T-cell (primary cell): ENCODE measurements at regions of chr3 and their contacts with region 1.

Region 1: GRCh38 chr3:26108846-26109489 is 319.1 kb downstream of the OXSM start:
- DNase-seq: no peak
- ATAC-seq: no peak
- H3K4me3 ChIP-seq: no peak overlapping the region
- H3K4me3 Mint-ChIP-seq: no peak overlapping the region
- H3K27ac ChIP-seq: no peak overlapping the region
- H3K27ac Mint-ChIP-seq: no peak overlapping the region
- H3K4me1 ChIP-seq: no peaks in the 10 kb centered on the region
- H3K4me1 Mint-ChIP-seq: no peaks in the 10 kb centered on the region
- H3K27me3 ChIP-seq: no peaks in the 10 kb centered on the region
- H3K27me3 Mint-ChIP-seq: no peaks in the 10 kb centered on the region

Region 2: DNA sequence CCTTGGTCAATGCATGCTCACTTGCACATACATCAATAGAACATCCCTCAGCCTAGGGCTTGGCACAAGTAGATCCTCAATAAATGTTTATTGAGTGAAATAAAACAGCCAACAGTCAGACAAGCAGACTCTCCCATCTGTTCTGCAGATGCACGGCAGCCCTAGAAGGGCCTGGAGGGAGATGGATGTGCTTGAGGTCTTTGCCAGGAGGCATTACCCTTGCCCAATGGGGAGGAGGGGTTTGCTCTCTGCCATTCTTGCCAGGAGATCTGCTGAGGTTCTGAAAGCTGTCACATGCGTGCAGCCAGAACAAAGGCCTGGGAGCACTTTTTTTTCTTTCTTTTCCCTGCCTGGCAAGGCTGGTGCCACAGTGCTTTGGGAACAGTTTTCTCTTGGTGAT is 1265.0 kb before region 1 on chr3:
- CTCF ChIA-PET with region 1: no interaction called
- POLR2A ChIA-PET with region 1: interaction called in 1 of 2 experiments, 15 read pairs
- DNase-seq: no peak
- ATAC-seq: no peak
- H3K4me3 ChIP-seq: no peak overlapping the region
- H3K4me3 Mint-ChIP-seq: no peak overlapping the region
- H3K27ac ChIP-seq: no peak overlapping the region
- H3K27ac Mint-ChIP-seq: no peak overlapping the region
- H3K4me1 ChIP-seq: no peaks in the 10 kb centered on the region
- H3K4me1 Mint-ChIP-seq: no peaks in the 10 kb centered on the region
- H3K27me3 ChIP-seq: no peaks in the 10 kb centered on the region
- H3K27me3 Mint-ChIP-seq: no peaks in the 10 kb centered on the region

Region 3: DNA sequence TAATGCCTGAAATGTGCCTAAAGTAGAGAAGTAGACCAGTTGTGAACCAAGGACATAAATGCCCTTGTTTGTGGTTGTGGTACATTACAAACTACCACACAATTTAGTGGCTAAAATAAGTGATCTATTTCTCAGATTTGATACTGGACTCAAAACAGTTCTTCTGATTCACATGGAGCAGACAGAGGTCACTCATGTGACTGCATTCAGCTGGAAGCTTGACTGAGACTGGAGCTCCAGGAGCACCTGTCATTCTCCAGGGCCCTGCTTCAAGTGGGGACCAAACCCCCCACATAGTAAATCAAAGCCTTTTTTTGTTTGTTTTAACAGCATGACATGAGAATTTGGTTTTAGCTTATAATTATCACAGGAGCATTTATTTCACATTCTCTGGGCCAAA is 17.9 kb before region 1 on chr3:
- CTCF ChIA-PET with region 1: no interaction called
- POLR2A ChIA-PET with region 1: no interaction called
- DNase-seq: no peak
- ATAC-seq: no peak
- H3K4me3 ChIP-seq: no peak overlapping the region
- H3K4me3 Mint-ChIP-seq: no peak overlapping the region
- H3K27ac ChIP-seq: no peak overlapping the region
- H3K27ac Mint-ChIP-seq: no peak overlapping the region
- H3K4me1 ChIP-seq: no peaks in the 10 kb centered on the region
- H3K4me1 Mint-ChIP-seq: no peaks in the 10 kb centered on the region
- H3K27me3 ChIP-seq: no peaks in the 10 kb centered on the region
- H3K27me3 Mint-ChIP-seq: no peaks in the 10 kb centered on the region

Region 4: GRCh38 chr3:26141296-26141695 is 32.3 kb after region 1 on chr3:
- CTCF ChIA-PET with region 1: no interaction called
- POLR2A ChIA-PET with region 1: no interaction called
- DNase-seq: no peak
- ATAC-seq: no peak
- H3K4me3 ChIP-seq: no peak overlapping the region
- H3K4me3 Mint-ChIP-seq: no peak overlapping the region
- H3K27ac ChIP-seq: no peak overlapping the region
- H3K27ac Mint-ChIP-seq: no peak overlapping the region
- H3K4me1 ChIP-seq: no peaks in the 10 kb centered on the region
- H3K4me1 Mint-ChIP-seq: no peaks in the 10 kb centered on the region
- H3K27me3 ChIP-seq: no peaks in the 10 kb centered on the region
- H3K27me3 Mint-ChIP-seq: no peaks in the 10 kb centered on the region